HCT116 (cell line): ENCODE measurements at regions of chr11 and their contacts with region 1.

Region 1: GRCh38 chr11:20397281-20397680 is 9.8 kb downstream of the PRMT3 start:
- DNase-seq: peak; percentile 36
- ATAC-seq: peak; percentile 80
- H3K4me3 ChIP-seq: no peak overlapping the region
- H3K27ac ChIP-seq: no peak overlapping the region
- H3K4me1 ChIP-seq: no peaks in the 10 kb centered on the region
- H3K27me3 ChIP-seq: no peaks in the 10 kb centered on the region
- CTCF ChIP-seq: peak; percentile 33 to 57 (median 55); a peak in 5 of 6 replicates
- POLR2A ChIP-seq: no peak
- RAD21 ChIP-seq: peak; percentile 25; the same call in 1 of the 2 replicates

Region 2: DNA sequence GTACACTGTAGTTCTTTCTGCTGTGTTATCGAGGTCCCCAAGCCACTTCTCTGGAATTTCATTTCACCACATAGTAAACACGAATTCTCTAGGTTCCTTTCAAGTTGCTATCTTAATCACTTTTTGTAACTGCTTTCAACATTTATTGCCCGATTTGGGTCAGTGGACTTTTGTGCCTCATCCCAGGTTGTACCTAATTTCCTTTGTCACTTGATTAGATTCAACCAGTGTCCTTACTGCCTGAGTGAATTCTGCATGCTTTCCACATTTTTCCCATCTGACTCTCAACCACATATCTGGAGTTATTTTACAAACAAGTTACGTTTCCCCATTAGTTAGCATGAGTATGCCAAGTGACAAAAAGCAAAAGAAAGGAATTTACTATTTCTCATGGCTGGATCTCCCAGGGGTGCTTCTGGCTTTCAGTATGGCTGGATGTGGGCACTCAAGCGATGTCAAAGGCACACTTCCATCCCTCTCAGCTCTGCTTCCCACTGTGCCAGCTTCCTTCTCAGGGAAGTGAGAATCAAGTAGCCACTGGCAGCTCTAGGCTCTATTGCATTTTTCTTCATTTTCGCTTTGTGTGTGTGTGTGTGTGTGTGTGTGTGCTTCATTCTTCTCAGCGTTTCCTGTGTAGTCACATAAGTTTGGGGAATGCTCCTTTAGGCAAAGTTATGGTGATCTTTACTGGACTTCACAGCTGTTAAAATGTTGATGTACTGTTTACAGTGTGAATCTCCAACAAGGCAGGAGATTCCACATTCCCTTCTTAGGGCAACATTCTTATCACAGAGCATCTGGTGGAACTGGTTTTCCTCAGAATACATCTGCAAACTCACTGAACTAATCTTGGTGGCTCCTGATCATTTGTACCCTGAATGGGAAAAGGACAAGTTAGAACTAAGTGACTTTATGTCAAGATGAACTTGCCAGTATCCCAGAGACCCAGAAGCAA is 365.8 kb before region 1 on chr11:
- CTCF ChIA-PET with region 1: no interaction called
- POLR2A ChIA-PET with region 1: no interaction called
- RAD21 ChIA-PET with region 1: no interaction called
- intact Hi-C with region 1: no loop called
- DNase-seq: no peak
- ATAC-seq: no peak
- H3K4me3 ChIP-seq: no peak overlapping the region
- H3K27ac ChIP-seq: no peak overlapping the region
- H3K4me1 ChIP-seq: no peaks in the 10 kb centered on the region
- H3K27me3 ChIP-seq: peaks cover 56% of the 10 kb centered on the region
- CTCF ChIP-seq: no peak
- POLR2A ChIP-seq: no peak
- RAD21 ChIP-seq: no peak

Region 3: GRCh38 chr11:20415432-20415831 is 18.2 kb after region 1 on chr11:
- CTCF ChIA-PET with region 1: interaction called, 10 read pairs
- POLR2A ChIA-PET with region 1: interaction called, 3 read pairs
- RAD21 ChIA-PET with region 1: no interaction called
- intact Hi-C with region 1: no loop called
- DNase-seq: no peak
- ATAC-seq: no peak
- H3K4me3 ChIP-seq: no peak overlapping the region
- H3K27ac ChIP-seq: no peak overlapping the region
- H3K4me1 ChIP-seq: no peaks in the 10 kb centered on the region
- H3K27me3 ChIP-seq: no peaks in the 10 kb centered on the region
- CTCF ChIP-seq: no peak
- POLR2A ChIP-seq: no peak
- RAD21 ChIP-seq: no peak

Region 4: DNA sequence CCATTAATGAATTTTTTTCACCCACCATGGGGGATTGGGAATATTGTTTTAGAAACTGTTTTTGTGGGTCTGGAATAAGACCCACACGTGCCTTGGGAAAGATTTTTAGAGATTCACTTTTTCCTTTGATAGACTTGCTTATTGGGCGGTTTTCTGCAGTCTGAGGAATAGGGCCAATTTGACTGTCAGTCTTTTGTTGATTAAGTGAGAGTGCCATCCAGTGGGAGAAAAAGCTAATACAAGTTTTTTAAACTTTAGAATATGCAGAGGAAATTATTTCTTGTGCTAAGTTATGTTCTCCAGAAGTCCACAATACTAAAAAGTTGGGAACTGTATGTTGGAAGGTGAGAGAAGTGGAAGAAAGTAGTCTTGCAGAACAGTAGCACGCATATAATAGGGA is 46.3 kb after region 1 on chr11:
- CTCF ChIA-PET with region 1: interaction called, 12 read pairs
- POLR2A ChIA-PET with region 1: no interaction called
- RAD21 ChIA-PET with region 1: no interaction called
- intact Hi-C with region 1: loop called (anchors 2 kb)
- DNase-seq: peak; percentile 18
- ATAC-seq: peak; percentile 59
- H3K4me3 ChIP-seq: no peak overlapping the region
- H3K27ac ChIP-seq: no peak overlapping the region
- H3K4me1 ChIP-seq: no peaks in the 10 kb centered on the region
- H3K27me3 ChIP-seq: no peaks in the 10 kb centered on the region
- CTCF ChIP-seq: peak; percentile 37 to 62 (median 42); a peak in 4 of 6 replicates
- POLR2A ChIP-seq: no peak
- RAD21 ChIP-seq: peak; percentile 50